Prostate gland (tissue), 2 donors: ENCODE measurements at regions of chr5 and their contacts with region 1.

Region 1: DNA sequence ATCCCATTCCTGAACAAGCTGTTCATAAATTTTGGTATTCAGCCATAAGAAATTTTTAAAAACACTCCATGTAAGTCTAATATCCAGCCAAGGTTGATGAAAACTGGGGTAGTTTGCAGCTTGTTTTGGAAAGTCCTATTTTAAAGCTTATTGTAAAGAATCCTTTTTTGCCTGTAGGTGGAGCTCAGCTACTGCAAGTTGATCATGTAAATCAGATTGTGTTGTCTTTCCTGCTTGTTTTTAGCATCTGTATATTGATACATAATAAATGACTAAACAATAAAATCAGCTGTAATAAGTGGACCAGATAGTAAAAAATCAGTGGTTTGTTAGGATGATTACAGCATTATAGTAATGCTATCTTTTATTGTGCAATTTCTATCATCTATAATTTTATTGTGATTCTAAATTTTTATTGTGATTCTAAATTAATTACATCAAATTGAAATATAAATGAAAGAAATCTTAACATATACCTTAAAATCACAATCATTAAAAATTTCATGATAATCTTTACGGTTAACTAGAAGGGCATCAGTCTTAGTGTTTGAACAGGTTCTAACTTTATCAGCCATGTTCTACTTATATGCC is 42.4 kb downstream of the CWC27 start:
- DNase-seq: no peak
- H3K4me3 ChIP-seq: no peak overlapping the region
- H3K27ac ChIP-seq: no peak overlapping the region
- H3K4me1 ChIP-seq: no peaks in the 10 kb centered on the region
- H3K27me3 ChIP-seq: no peaks in the 10 kb centered on the region
- CTCF ChIP-seq: peak in 3 of 4 experiments; percentile 47 to 71 (median 69)
- POLR2A ChIP-seq: no peak

Region 2: DNA sequence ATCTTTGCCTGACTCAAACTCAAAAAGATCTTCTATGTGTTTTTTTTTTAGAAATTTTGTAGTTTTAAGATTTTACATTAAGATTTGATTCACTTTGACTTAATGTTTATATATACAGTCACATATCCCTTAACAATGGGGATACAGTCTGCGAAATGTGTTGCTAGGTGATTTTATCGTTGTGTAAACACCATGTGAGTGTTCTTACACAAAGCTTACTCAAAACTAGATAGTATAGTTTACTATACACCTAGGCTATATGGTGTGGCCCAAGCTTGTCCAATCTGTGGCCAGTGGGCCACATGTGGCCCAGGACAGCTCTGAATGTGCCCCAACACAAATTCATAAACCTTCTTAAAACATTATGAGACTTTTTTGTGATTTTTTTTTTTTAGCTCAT is 89.5 kb after region 1 on chr5:
- intact Hi-C with region 1: no loop called
- DNase-seq: no peak
- H3K4me3 ChIP-seq: no peak overlapping the region
- H3K27ac ChIP-seq: no peak overlapping the region
- H3K4me1 ChIP-seq: no peaks in the 10 kb centered on the region
- H3K27me3 ChIP-seq: no peaks in the 10 kb centered on the region
- CTCF ChIP-seq: no peak
- POLR2A ChIP-seq: no peak

Region 3: DNA sequence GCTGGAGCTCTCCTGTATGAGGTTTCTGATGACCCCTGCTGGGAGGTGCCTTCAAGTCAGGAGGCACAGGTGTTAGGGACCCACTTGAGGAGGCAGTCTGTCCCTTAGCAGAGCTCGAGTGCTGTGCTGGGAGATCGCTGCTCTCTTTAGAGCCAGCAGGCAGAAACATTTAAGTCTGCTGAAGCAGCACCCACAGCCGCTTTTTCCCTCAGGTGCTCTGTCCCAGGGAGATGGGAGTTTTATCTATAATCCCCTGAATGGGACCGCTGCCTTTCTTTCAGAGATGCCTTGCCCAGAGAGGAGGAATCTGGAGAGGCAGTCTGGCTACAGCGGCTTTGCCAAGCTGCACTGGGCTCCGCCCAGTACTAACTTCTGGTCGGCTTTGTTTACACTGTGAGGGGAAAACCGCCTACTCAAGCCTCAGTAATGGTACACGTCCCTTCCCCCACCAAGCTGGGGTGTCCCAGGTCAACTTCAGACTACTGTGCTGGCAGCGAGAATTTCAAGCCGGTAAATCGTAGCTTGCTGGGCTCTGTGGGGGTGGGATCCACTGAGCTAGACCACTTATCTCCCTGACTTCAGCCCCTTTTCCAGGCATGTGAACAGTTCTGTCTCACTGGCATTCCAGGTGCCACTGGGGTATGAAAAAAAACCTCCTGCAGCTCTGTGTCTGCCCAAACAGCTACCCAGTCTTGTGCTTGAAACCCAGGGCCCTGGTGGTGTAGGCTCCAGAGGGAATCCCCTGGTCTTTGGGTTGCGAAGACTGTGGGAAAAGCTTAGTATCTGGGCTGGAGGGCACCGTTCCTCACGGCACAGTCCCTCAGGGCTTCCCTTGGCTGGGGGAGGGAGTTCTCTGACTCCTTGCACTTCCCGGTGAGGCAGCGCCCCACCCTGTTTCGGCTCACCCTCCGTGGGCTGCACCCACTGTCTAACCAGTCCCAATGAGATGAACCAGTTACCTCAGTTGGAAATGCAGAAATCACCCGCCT is 128.7 kb after region 1 on chr5:
- intact Hi-C with region 1: loop called (anchors 10 kb)
- DNase-seq: peak; percentile 12
- H3K4me3 ChIP-seq: no peak overlapping the region
- H3K27ac ChIP-seq: no peak overlapping the region
- H3K4me1 ChIP-seq: no peaks in the 10 kb centered on the region
- H3K27me3 ChIP-seq: no peaks in the 10 kb centered on the region
- CTCF ChIP-seq: no peak
- POLR2A ChIP-seq: no peak

Region 4: DNA sequence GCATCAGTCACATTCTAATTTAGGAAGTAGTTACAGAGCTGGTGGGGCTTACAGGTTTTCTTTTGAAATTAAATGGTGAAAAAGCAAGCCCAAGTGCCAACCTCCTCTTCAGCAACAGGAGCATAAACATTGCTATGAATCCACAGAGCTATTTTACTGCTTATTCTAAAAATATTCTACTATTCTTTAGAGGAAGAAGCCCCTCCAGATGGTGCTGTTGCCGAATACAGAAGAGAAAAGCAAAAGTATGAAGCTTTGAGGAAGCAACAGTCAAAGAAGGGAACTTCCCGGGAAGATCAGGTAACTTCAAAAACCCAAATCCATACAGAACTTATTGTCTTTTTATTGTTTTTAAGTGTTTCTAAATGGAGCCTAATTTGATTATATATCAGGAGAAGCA is 160.4 kb after region 1 on chr5:
- intact Hi-C with region 1: no loop called
- DNase-seq: no peak
- H3K4me3 ChIP-seq: no peak overlapping the region
- H3K27ac ChIP-seq: no peak overlapping the region
- H3K4me1 ChIP-seq: no peaks in the 10 kb centered on the region
- H3K27me3 ChIP-seq: no peaks in the 10 kb centered on the region
- CTCF ChIP-seq: no peak
- POLR2A ChIP-seq: no peak

Region 5: DNA sequence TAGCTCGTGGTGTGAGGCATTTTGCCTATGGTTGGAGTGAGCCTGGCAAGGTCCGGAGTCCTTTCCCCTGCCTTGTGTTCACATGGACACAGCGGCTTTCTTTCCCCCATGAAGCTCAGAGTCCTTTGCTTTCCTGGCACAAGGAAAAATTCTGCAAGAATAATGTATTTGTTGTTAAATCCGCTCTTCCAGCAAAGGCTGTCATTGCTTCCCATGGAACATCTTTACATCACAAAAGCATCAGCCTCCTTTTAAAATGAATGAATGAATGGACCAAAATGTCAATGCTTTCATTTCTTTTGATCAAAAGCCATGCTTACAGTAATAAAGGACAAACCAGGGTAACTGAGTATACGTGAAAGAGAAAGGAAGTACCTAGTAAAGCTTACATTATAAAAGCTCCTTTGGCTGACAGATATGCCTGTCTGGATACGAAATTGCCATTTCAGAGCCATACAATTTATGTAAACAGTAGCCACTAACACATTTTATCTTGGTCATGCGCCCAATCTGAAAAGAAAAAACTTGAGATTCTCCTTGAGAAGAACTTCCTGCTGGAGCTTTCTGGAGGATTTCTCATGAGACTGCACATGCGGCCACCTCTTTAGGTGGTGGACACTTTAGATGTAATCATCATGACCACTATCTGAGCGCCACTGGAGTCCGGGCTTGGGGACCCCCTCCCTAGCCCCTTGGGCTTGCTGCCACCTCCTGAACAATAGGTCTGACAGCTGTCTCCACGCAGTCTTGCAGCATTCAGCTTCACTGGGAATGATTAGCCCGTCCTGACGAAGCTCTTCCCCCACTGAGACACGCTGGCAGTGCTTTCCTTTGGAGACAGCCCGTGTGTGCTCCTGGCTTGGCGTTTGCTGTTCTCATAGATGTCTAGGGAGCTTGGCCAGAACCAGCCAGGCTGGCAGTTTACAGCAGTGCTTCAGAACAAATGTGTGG is 314.7 kb after region 1 on chr5:
- intact Hi-C with region 1: loop called (anchors 10 kb)
- DNase-seq: no peak
- H3K4me3 ChIP-seq: no peak overlapping the region
- H3K27ac ChIP-seq: no peak overlapping the region
- H3K4me1 ChIP-seq: no peaks in the 10 kb centered on the region
- H3K27me3 ChIP-seq: no peaks in the 10 kb centered on the region
- CTCF ChIP-seq: no peak
- POLR2A ChIP-seq: no peak